ENCODE measurements at regions of chr13 and their contacts with region 1.

Region 1: DNA sequence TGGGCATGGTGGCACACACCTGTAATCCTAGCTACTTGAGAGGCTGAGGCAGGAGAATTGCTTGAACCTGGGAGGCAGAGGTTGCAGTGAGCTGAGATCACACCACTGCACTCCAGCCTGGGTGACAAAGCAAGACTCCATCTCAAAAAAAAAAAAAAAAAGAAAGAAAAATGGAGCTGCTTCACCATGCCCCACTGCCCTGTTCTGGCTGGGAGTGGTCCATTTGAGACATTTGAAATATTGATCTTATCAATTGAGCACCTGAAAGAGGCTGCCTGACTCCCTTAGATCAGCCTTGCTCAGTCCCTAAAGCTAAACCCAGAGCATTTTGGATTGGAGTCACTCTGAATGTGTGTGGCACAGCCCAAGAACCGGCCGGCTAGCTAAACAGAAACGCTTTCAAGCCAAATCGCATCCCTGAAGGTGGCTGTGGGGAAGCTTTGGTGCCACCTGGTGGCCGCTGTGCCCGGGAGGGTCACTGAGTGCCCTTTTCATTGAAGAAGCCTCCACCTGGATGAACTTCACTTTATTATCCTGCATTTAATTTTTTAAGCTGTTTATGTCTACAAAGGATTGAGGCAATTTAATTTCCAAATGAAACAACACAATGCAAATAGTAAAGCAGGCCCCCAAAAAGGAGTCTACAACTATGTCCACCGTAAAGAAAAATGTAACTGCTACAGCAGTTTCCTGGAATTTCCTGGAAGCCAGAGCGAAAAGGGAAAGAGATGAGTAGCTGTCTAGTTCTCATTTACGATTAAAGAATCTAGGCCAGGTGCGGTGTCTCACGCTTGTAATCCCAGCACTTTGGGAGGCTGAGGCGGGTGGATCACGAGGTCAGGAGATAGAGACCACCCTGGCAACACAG is 53.1 kb upstream of the SERPINE3 start:
- DNase-seq: peak; percentile 90
- H3K4me3 ChIP-seq: no peak overlapping the region
- H3K27ac ChIP-seq: no peak overlapping the region
- H3K4me1 ChIP-seq: peaks cover 0 to 9% (median 4%) of the 10 kb centered on the region in 6 donors
- H3K27me3 ChIP-seq: no peaks in the 10 kb centered on the region
- CTCF ChIP-seq: peak; percentile 45 to 91 (median 81)
- POLR2A ChIP-seq: no peak

Region 2: GRCh38 chr13:50916701-50917184 is 369.6 kb before region 1 on chr13:
- intact Hi-C with region 1: no loop called
- DNase-seq: no peak
- H3K4me3 ChIP-seq: peak overlapping the region in 1 of 8 donors; percentile 41
- H3K27ac ChIP-seq: peak overlapping the region; percentile 72 to 91 (median 82)
- H3K4me1 ChIP-seq: peaks cover 43 to 100% (median 78%) of the 10 kb centered on the region in 6 donors
- H3K27me3 ChIP-seq: no peaks in the 10 kb centered on the region
- CTCF ChIP-seq: no peak
- POLR2A ChIP-seq: no peak

Region 3: DNA sequence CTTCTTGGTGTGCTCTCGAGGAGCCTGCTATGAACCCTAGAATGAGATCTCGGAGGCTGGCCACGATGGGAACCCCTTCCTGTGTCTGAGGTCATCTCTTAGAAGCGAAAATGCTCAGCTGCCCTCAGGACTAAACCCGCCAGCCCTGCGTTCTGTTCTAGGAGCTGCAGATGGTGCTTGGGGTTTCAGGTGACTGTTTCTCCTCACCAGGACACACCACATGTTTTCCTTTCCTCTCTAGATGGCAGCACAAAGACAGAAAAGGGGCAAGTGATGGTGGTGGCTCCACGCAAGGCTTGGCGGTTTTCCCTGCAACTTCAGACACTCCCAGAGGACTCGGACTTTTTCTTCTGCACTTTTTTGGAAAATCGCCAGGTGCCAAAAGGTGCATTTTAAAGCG is 316.7 kb before region 1 on chr13:
- intact Hi-C with region 1: no loop called
- DNase-seq: no peak
- H3K4me3 ChIP-seq: no peak overlapping the region
- H3K27ac ChIP-seq: no peak overlapping the region
- H3K4me1 ChIP-seq: no peaks in the 10 kb centered on the region
- H3K27me3 ChIP-seq: no peaks in the 10 kb centered on the region
- CTCF ChIP-seq: no peak
- POLR2A ChIP-seq: no peak

Region 4: DNA sequence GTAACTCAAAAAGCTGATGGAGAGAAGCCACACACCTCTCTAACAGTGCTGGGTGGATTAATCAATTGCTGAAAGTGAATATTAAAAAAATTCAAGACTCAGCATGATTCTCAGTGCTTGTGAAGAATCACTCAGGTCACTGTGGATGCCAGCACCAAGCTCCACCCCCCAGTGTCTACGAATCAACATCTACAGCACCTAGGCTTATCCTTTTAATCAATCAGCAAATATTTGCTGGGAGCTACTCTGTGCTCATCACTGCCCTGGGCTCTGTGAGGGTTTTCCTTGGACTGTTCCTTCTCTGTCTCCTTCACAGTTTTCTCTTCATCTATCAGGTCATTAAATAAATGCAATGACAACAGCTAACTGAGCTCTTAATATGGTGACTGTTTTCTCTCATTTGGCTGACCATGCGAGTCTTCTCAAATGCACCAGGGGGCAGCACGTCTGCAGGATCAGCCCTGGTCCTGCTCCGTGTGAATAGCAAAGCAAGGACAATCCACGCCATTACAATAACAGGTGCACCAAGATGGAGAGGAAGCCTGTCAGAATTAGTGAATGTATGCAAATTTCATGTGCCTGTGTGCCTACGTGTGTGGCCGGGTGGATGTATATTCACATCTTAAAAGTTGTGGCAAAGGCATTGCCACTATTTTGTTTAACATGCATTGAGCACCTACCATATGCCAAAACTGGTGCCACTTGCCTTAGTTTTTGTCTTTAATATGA is 160.7 kb before region 1 on chr13:
- intact Hi-C with region 1: loop called (anchors 5 kb)
- DNase-seq: no peak
- H3K4me3 ChIP-seq: no peak overlapping the region
- H3K27ac ChIP-seq: no peak overlapping the region
- H3K4me1 ChIP-seq: peaks cover 0 to 8% (median 3%) of the 10 kb centered on the region in 6 donors
- H3K27me3 ChIP-seq: peaks cover 0 to 3% (median 0%) of the 10 kb centered on the region in 7 donors
- CTCF ChIP-seq: peak; percentile 22 to 83 (median 76)
- POLR2A ChIP-seq: no peak

Region 5: DNA sequence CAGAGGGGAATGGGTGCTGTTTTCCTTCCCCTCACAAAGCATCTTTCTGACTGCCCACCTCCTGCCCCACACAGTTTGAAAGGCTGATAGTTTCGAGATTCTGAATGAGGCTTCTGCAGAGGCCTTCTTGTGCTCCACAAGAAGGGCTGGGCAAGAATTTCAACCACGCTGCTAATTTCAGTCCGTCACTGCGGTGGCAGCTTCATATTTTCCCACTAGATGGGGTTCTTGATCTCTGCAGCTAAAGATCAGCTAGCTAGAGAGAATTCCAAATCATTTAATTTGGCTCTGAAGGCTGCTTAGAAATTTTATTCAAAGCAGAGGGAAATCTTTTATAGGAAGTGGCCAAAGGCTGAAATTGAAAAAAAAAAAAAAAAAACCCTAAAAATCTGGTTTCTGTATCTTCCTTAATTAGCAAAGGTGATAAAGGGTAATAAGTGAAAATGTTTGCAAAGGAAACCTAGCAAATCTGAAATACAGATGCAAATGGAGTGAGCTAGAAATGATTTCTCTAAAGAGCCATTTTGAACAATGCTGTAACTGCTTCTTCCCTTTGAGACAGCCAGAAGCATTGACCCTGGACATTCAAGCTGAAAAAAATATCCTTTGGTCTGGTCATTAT is 137.3 kb before region 1 on chr13:
- intact Hi-C with region 1: loop called (anchors 5 kb)
- DNase-seq: no peak
- H3K4me3 ChIP-seq: no peak overlapping the region
- H3K27ac ChIP-seq: peak overlapping the region in 7 of 8 donors; percentile 55 to 87 (median 76)
- H3K4me1 ChIP-seq: peaks cover 0 to 15% (median 10%) of the 10 kb centered on the region in 6 donors
- H3K27me3 ChIP-seq: peaks cover 0 to 5% (median 0%) of the 10 kb centered on the region in 7 donors
- CTCF ChIP-seq: peak in 9 of 11 experiments; percentile 17 to 68 (median 51)
- POLR2A ChIP-seq: no peak

Region 6: DNA sequence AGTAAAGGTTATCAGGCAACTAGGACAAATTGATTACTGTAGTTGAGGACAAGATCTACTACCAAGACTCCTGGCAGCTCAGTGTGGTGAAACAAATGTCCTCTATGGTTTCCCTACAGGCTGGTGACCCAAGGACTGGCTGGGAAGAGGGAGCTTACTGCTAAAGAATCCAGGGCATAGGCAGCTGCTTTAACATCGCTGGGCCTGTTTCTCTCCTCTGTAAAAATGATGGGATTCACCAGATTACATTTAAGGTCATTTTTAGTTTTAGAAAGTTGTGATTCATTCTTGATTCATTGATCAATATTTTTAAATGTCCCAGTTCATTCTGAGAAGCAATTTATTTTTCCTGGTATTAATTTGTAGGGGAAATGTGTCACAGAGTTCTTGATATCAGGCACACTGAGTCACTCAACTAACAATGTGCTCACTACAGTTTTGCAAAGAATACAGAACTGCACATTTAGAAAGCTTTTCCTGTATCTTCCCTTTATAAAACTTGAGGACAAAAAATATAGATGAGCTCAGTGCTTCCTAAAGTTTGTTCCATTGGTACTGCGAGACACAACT is 83.8 kb before region 1 on chr13:
- intact Hi-C with region 1: no loop called
- DNase-seq: no peak
- H3K4me3 ChIP-seq: no peak overlapping the region
- H3K27ac ChIP-seq: no peak overlapping the region
- H3K4me1 ChIP-seq: no peaks in the 10 kb centered on the region
- H3K27me3 ChIP-seq: peaks cover 0 to 10% (median 0%) of the 10 kb centered on the region in 7 donors
- CTCF ChIP-seq: no peak
- POLR2A ChIP-seq: no peak

Region 7: GRCh38 chr13:51222037-51222685 is 64.2 kb before region 1 on chr13 and contains the start of gene FAM124A:
- intact Hi-C with region 1: loop called (anchors 5 kb)
- DNase-seq: peak; percentile 82
- H3K4me3 ChIP-seq: peak within 1 kb of the TSS; percentile 58 to 89 (median 70)
- H3K27ac ChIP-seq: peak within 1 kb of the TSS; percentile 57 to 91 (median 88)
- H3K4me1 ChIP-seq: peaks cover 0 to 41% (median 25%) of the 10 kb centered on the region in 6 donors
- H3K27me3 ChIP-seq: peaks cover 0 to 42% (median 10%) of the 10 kb centered on the region in 7 donors
- CTCF ChIP-seq: peak in 3 of 11 experiments; percentile 27 to 36 (median 34)
- POLR2A ChIP-seq: no peak
- total RNA-seq, gene FAM124A: 17.3 to 39.9 (median 28.6) TPM

Region 8: DNA sequence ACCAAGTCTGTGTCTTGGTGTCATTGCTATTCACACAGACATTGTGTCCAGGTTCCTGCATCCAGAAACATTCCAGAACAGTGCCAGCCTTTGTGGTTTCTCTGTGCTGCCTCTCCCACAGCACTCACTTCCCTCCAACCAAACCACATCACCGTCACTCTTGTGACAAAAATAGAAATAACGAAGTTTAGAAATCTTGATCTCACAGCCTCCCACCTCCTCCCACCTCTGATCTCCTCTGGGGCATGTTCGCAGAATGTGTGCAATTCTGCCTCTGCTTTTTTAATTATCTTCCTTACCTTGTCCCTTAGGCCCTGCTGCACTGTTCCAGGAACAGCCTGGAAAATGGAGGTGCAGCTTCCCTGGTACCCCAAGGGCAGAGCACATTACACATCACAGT is 44.4 kb after region 1 on chr13:
- intact Hi-C with region 1: no loop called
- DNase-seq: no peak
- H3K4me3 ChIP-seq: no peak overlapping the region
- H3K27ac ChIP-seq: no peak overlapping the region
- H3K4me1 ChIP-seq: peaks cover 0 to 11% (median 1%) of the 10 kb centered on the region in 6 donors
- H3K27me3 ChIP-seq: no peaks in the 10 kb centered on the region
- CTCF ChIP-seq: no peak
- POLR2A ChIP-seq: no peak

Measured in spleen (tissue), 13 donors.